Activated T-helper 1 cell treated with anti-CD3 and anti-CD28 coated beads, Interleukin-12 subunit alpha, Interleukin-12 subunit beta, Interleukin-2, Interleukin-4 antibody, amounts not matched to agents 30 ng/mL and 10 ng/mL and 1 ng/mL, durations not matched to agents 14 hours and 24 hours and 36 hours (primary cell): ENCODE measurements at regions of chr9 and their contacts with region 1.

Region 1: DNA sequence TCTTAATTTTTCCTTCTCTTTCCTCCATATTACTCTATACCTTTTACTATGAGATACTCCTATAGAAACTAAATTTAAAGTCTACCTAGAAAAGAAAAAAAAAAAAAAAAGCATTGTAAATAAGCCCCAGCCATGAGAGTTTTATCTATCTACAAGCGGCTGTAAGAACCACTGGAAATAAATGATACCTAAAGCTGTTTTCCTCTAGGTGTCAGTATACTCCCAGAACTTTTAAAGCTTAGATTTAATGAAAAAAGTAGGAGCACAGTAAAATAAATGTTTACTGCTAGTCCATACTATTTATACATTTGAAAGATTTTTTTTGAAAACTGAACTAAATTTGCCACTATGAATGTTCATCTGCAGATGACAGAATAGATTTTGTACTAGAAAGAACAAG is 26.2 kb downstream of the TYRP1 start:
- DNase-seq: no peak
- H3K4me3 Mint-ChIP-seq: no peak overlapping the region
- H3K27ac Mint-ChIP-seq: no peak overlapping the region
- H3K4me1 Mint-ChIP-seq: no peaks in the 10 kb centered on the region
- H3K27me3 Mint-ChIP-seq: no peaks in the 10 kb centered on the region

Region 2: DNA sequence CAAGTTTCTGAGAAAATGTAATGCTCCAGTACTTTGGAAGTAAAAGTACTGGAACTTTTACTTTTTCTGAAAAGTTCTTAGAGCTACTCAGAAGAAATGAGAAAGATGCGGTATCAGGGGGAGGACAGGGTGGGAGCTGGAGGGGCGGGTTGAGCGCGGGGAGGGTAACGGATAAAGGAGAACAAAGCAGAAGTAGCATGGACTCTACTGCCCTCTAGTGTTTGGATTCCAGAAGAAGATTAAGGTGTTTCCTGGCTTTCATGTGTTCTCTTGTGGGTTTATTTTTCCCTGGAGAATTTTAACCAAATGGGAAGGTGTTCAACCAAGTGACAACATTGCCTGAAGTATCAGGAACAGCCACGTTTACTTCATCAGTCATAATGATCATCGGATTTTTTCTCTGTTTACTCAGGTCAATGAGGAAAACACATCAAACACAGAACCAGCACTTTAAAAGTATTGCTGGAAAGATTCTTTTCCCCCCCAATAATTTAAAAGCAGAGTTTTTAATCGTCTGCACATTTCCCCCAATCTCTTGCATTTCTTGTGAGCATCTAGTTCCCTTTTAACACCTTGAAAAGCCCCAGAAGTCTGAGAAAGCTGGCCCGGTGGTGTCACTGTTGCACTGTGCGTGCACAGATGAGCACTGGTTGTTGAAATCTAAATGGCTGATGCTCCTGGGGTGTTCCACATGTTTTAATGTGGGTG is 369.4 kb after region 1 on chr9:
- intact Hi-C with region 1: loop called (anchors 2 kb)
- DNase-seq: no peak
- H3K4me3 Mint-ChIP-seq: no peak overlapping the region
- H3K27ac Mint-ChIP-seq: no peak overlapping the region
- H3K4me1 Mint-ChIP-seq: no peaks in the 10 kb centered on the region
- H3K27me3 Mint-ChIP-seq: no peaks in the 10 kb centered on the region